ENCODE measurements at regions of chr12 and their contacts with region 1.

Region 1: DNA sequence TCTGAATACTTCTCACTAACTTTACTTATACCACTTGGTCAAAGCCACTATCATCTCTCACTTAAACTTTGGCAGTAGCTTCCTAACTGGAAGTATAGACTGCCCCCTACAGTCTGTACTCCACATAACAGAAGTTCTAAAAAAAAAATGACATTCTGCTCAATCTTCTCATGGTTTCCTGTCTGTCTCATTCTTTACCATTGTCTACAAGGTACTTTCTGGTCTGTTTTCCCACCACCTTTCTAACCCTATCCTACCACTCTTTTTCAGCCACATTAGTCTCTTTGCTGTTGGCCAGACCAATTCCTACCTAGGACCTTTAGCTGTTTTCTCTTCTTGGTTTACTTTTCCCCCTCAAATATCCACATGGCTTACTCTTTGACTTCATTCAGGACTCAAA is 14.7 kb downstream of the CPSF6 start:
- DNase-seq: no peak
- H3K4me3 Mint-ChIP-seq: no peak overlapping the region
- H3K27ac Mint-ChIP-seq: peak overlapping the region; percentile 2
- H3K4me1 Mint-ChIP-seq: peaks cover 26% of the 10 kb centered on the region
- H3K27me3 Mint-ChIP-seq: no peaks in the 10 kb centered on the region

Region 2: GRCh38 chr12:69225251-69225910 is 28.7 kb before region 1 on chr12:
- CTCF ChIA-PET with region 1: no interaction called
- DNase-seq: no peak
- H3K4me3 Mint-ChIP-seq: no peak overlapping the region
- H3K27ac Mint-ChIP-seq: no peak overlapping the region
- H3K4me1 Mint-ChIP-seq: no peaks in the 10 kb centered on the region
- H3K27me3 Mint-ChIP-seq: no peaks in the 10 kb centered on the region

Region 3: DNA sequence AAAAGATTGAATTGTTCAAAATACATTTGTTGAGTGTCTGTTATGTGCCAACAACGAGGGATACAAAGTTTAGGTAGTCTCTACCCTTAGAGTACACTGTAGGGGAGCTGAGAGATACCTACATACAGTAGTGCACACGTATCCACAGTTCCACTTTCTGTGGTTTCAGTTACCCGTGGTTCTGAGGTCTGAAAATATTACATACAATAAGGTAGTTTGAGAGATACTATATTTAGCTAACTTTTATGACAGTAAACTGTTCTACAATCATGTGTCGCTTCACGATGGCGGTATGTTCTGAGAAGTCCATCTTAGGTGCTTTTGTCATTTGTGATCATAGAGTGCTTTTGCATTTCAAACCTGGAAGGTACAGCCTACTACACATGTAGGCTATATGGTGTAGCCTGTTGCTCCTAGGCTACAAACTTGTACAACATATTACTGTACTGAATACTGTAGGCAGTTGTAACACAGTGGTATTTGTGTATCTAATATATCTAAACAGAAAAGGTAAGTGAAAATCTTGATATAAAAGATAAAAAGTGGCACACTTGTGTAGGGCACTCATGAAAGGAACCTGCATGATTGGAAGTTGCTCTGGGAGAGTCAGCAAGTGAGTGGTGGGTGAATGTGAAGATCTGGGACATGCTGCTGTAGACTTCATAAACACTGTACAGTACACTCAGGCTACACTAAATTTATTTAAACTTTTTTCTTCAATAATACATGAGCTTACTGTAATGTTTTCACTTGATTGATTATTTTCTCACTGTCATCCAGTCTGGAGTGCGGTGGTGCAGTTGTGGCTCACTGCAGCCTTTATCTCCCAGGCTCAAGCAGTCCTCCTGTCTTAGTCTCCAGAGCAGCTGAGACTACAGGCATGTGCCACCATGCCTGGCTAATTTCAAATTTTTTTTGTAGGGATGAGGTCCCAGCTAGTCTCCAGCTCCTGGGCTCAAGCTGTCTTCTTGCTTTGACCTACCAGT is 10.7 kb before region 1 on chr12:
- CTCF ChIA-PET with region 1: interaction called, 11 read pairs
- DNase-seq: no peak
- H3K4me3 Mint-ChIP-seq: peak overlapping the region; percentile 39
- H3K27ac Mint-ChIP-seq: peak overlapping the region; percentile 45
- H3K4me1 Mint-ChIP-seq: peaks cover 66% of the 10 kb centered on the region
- H3K27me3 Mint-ChIP-seq: no peaks in the 10 kb centered on the region

Region 4: GRCh38 chr12:69833696-69834095 is 579.6 kb after region 1 on chr12:
- CTCF ChIA-PET with region 1: no interaction called
- DNase-seq: no peak
- H3K4me3 Mint-ChIP-seq: no peak overlapping the region
- H3K27ac Mint-ChIP-seq: no peak overlapping the region
- H3K4me1 Mint-ChIP-seq: no peaks in the 10 kb centered on the region
- H3K27me3 Mint-ChIP-seq: peaks cover 14% of the 10 kb centered on the region